ENCODE measurements at regions of chr12 and their contacts with region 1.

Region 1: GRCh38 chr12:127165567-127166392 is 1101.2 kb upstream of the TMEM132C start:
- DNase-seq: peak; percentile 76 to 89 (median 81)
- H3K4me3 ChIP-seq: peak overlapping the region in 1 of 2 donors; percentile 45
- H3K4me3 Mint-ChIP-seq: peak overlapping the region; percentile 76 to 92 (median 88)
- H3K27ac ChIP-seq: peak overlapping the region; percentile 63
- H3K27ac Mint-ChIP-seq: peak overlapping the region; percentile 36 to 94 (median 91)
- H3K4me1 ChIP-seq: peaks cover 22% of the 10 kb centered on the region
- H3K4me1 Mint-ChIP-seq: peaks cover 9 to 30% (median 22%) of the 10 kb centered on the region in 4 donors
- H3K27me3 ChIP-seq: no peaks in the 10 kb centered on the region
- H3K27me3 Mint-ChIP-seq: peaks cover 6 to 11% of the 10 kb centered on the region in 2 donors

Region 2: DNA sequence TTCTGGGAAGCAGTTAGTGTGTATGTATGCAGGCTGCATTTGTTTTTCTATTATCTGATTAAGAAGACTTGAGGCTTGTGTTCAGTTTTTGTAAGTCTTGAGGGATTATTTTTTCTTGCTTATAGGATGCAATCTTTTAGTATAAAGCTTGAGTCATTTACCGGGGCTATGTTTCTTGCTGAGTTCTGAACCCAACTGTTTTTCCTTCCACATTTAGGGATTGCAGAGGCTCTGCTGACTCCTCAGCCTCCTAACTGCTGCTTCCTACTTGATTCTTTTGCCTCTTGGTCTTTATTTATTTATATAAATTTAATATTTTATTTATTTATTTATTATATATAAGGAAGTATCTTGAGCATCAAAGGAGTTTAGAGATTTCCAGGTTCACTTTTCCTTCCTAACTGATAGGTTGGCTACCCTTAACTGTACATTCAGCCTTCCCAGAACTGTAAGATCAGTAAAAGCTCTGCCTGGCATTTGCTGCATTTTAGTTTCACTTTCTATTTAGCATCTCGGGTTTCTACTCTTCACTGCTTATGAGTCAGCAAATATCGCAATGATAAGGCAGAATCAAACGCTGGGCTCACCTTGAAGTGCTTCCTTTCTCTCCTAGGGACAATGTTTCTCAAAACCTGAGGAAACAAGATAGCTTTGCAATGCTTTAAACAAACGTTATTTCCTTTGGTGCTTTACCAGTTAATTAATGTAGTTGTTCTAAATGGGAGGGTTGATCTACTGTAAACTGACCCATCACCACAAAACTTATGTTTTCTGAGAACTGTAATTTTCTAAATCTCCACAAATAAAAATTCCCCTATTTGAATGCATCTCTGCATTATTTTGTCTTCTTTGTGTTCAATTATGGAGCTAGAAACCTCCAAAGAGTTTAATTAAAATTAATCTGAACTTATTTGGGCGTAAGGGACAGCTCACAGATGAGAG is 82.5 kb before region 1 on chr12:
- CTCF ChIA-PET with region 1: no interaction called
- POLR2A ChIA-PET with region 1: no interaction called
- intact Hi-C with region 1: loop called (anchors 5 kb)
- DNase-seq: peak in 4 of 5 donors; percentile 35 to 59 (median 44)
- H3K4me3 ChIP-seq: peak overlapping the region; percentile 23 to 44
- H3K4me3 Mint-ChIP-seq: peak overlapping the region; percentile 80 to 87 (median 85)
- H3K27ac ChIP-seq: no peak overlapping the region
- H3K27ac Mint-ChIP-seq: peak overlapping the region; percentile 24 to 89 (median 84)
- H3K4me1 ChIP-seq: peaks cover 10% of the 10 kb centered on the region
- H3K4me1 Mint-ChIP-seq: peaks cover 8 to 14% (median 11%) of the 10 kb centered on the region in 4 donors
- H3K27me3 ChIP-seq: no peaks in the 10 kb centered on the region
- H3K27me3 Mint-ChIP-seq: peaks cover 4 to 5% of the 10 kb centered on the region in 2 donors

Region 3: DNA sequence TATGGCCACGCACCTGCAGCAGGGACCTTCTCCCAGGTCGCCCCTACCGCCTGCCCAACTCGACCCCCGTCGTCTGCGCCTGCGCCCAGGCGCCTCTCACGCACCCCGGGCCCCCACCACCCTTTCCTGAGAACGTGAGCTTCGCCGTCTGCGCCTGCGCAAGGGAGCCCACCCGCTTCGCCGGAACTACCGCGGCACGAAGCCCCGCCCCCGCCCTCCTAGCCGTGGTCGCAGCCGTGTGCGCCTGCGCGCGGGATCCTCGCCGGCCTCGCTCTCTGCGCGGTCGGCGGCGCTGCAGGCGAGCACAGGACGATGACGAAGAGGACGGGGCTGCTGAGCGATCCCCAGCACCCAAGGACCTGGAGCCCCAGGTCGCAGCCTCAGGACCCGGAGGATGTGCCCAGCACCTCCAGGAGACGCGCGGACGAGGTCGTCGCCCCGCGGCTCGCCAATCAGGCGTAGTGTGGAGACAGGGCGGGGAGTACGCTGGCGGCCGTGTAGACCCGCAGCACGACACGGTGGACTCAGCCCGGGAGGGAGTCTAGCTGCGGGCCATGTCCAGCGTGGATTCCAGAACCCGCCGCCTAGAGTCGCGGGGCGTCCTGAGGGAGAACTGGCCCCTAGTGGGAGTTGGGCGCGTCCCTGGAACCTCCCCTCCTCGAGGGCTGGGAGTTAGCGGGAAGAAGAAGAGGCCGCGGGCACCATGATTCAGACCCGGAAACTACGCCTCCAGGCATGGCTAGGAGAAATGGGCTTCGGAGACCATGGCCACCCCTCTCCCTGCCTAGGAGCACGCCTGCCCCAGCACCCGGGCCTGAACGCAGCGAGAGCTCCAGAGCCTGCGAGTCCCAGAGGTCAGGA is 19.6 kb before region 1 on chr12:
- CTCF ChIA-PET with region 1: no interaction called
- POLR2A ChIA-PET with region 1: no interaction called
- intact Hi-C with region 1: loop called (anchors 1 kb)
- DNase-seq: peak in 4 of 5 donors; percentile 57 to 63 (median 60)
- H3K4me3 ChIP-seq: peak overlapping the region; percentile 11 to 41
- H3K4me3 Mint-ChIP-seq: peak overlapping the region in 7 of 8 donors; percentile 78 to 86 (median 79)
- H3K27ac ChIP-seq: no peak overlapping the region
- H3K27ac Mint-ChIP-seq: peak overlapping the region in 3 of 7 donors; percentile 51 to 59 (median 57)
- H3K4me1 ChIP-seq: no peaks in the 10 kb centered on the region
- H3K4me1 Mint-ChIP-seq: peaks cover 0 to 6% (median 0%) of the 10 kb centered on the region in 4 donors
- H3K27me3 ChIP-seq: no peaks in the 10 kb centered on the region
- H3K27me3 Mint-ChIP-seq: peaks cover 5 to 9% of the 10 kb centered on the region in 2 donors

Region 4: DNA sequence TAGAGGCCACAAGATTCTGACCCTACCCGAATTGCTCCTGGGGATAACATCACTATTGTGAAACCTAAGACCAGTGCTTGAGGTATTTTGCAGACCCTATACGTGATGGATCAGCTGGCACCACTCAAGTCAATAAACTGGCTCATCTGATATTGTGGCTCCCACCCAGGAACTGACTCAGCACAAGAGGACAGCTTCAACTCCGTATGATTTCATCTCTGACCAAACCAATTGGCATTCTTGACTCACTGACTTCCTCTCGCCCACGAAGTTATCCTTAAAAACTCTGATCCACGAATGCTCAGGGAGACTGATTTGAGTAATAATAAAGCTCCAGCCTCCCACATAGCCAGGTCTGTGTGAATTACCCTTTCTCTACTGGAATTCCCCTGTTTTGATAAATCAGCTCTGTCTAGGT is 65.1 kb after region 1 on chr12:
- CTCF ChIA-PET with region 1: no interaction called
- POLR2A ChIA-PET with region 1: no interaction called
- intact Hi-C with region 1: no loop called
- DNase-seq: no peak
- H3K4me3 ChIP-seq: no peak overlapping the region
- H3K4me3 Mint-ChIP-seq: no peak overlapping the region
- H3K27ac ChIP-seq: no peak overlapping the region
- H3K27ac Mint-ChIP-seq: no peak overlapping the region
- H3K4me1 ChIP-seq: no peaks in the 10 kb centered on the region
- H3K4me1 Mint-ChIP-seq: no peaks in the 10 kb centered on the region
- H3K27me3 ChIP-seq: no peaks in the 10 kb centered on the region
- H3K27me3 Mint-ChIP-seq: peaks cover 5 to 6% of the 10 kb centered on the region in 2 donors